ENCODE measurements at regions of chr1 and their contacts with region 1.

Region 1: DNA sequence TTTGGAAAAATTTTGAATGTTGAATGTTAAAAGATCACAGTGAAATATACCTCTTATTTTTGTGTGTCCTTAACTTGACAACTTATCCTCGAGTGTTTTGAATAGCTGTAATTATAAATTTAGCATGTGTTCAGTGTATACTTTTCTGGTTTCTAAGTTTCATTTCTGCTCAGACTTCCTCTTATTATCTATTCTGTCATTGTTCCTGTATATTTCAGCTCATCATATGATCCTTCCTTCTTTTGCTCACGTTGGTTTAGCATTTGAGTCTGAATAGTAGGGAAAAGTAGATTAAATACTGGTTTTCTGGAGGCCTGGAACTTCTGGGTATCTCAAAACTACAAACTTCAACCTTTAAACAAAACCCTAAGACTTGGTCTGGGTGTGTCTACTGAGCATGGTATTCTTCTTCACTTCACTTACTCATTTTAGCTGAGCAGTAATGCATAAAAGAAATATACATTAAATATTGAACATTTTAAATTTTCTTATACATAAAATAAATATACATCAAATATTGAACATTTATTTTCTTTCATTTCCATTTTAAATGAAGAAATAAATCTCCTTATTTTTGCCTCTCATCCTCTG is 3.3 kb upstream of the ATP6V1G3 start:
- DNase-seq: no peak
- H3K4me3 ChIP-seq: no peak overlapping the region
- H3K4me3 Mint-ChIP-seq: peak overlapping the region in 5 of 8 donors; percentile 23 to 65 (median 30)
- H3K27ac ChIP-seq: no peak overlapping the region
- H3K27ac Mint-ChIP-seq: peak overlapping the region in 4 of 7 donors; percentile 24 to 84 (median 55)
- H3K4me1 ChIP-seq: peaks cover 22% of the 10 kb centered on the region
- H3K4me1 Mint-ChIP-seq: peaks cover 27 to 47% (median 37%) of the 10 kb centered on the region in 4 donors
- H3K27me3 ChIP-seq: no peaks in the 10 kb centered on the region
- H3K27me3 Mint-ChIP-seq: no peaks in the 10 kb centered on the region

Region 2: DNA sequence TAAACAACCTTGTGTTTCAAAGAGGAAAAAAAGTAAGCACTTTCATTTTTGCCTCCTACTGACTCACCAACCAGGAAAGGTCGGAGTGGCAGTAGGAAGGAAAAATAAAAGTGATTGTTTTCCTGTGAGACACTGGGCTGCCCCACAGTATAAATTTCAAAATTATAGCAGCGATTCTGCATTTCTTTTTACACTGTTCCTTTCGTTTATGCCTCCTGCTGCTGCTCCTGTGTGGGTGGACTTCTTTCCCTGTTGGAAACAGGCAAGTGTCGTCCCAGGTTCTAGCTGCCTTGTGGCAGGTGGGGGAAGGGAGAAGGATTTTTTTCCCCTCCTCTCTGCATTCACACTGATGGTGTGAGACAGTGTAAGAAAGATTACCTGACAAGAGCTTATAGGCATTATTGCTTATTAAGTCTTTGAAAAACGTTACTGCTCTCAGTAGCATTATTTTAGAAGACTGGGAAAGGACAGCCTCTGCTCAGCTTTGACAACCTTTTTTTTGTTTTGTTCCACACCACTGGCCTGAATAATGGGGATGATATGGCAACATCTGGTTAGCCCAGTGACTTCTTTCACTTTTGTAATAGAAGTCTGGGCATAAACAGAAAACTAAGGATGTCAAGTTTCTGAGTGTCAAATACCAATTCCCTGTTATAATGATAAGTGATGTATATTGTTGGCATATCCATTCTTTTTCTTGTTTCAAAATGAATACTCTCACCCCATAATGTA is 309.1 kb before region 1 on chr1:
- CTCF ChIA-PET with region 1: no interaction called
- POLR2A ChIA-PET with region 1: no interaction called
- intact Hi-C with region 1: no loop called
- DNase-seq: no peak
- H3K4me3 ChIP-seq: no peak overlapping the region
- H3K4me3 Mint-ChIP-seq: peak overlapping the region in 3 of 8 donors; percentile 14 to 53 (median 22)
- H3K27ac ChIP-seq: no peak overlapping the region
- H3K27ac Mint-ChIP-seq: peak overlapping the region in 4 of 7 donors; percentile 25 to 58 (median 40)
- H3K4me1 ChIP-seq: peaks cover 22% of the 10 kb centered on the region
- H3K4me1 Mint-ChIP-seq: peaks cover 15 to 32% (median 31%) of the 10 kb centered on the region in 4 donors
- H3K27me3 ChIP-seq: no peaks in the 10 kb centered on the region
- H3K27me3 Mint-ChIP-seq: no peaks in the 10 kb centered on the region

Region 3: GRCh38 chr1:198529414-198529813 is 14.4 kb before region 1 on chr1:
- CTCF ChIA-PET with region 1: no interaction called
- POLR2A ChIA-PET with region 1: interaction called, 6 read pairs
- intact Hi-C with region 1: loop called (anchors 1 kb)
- DNase-seq: no peak
- H3K4me3 ChIP-seq: no peak overlapping the region
- H3K4me3 Mint-ChIP-seq: peak overlapping the region in 1 of 8 donors; percentile 22
- H3K27ac ChIP-seq: no peak overlapping the region
- H3K27ac Mint-ChIP-seq: no peak overlapping the region
- H3K4me1 ChIP-seq: peaks cover 35% of the 10 kb centered on the region
- H3K4me1 Mint-ChIP-seq: peaks cover 32 to 47% (median 44%) of the 10 kb centered on the region in 4 donors
- H3K27me3 ChIP-seq: no peaks in the 10 kb centered on the region
- H3K27me3 Mint-ChIP-seq: no peaks in the 10 kb centered on the region

Measured in CD4-positive, alpha-beta memory T cell (primary cell).